ENCODE measurements at regions of chr12 and their contacts with region 1.

Region 1: GRCh38 chr12:76020731-76021672 is 10.6 kb downstream of the PHLDA1 start:
- DNase-seq: peak; percentile 97
- ATAC-seq: peak; percentile 59
- H3K4me3 ChIP-seq: peak overlapping the region; percentile 54
- H3K27ac ChIP-seq: peak overlapping the region; percentile 96
- H3K4me1 ChIP-seq: peaks cover 63% of the 10 kb centered on the region
- H3K27me3 ChIP-seq: no peaks in the 10 kb centered on the region
- CTCF ChIP-seq: no peak

Region 2: DNA sequence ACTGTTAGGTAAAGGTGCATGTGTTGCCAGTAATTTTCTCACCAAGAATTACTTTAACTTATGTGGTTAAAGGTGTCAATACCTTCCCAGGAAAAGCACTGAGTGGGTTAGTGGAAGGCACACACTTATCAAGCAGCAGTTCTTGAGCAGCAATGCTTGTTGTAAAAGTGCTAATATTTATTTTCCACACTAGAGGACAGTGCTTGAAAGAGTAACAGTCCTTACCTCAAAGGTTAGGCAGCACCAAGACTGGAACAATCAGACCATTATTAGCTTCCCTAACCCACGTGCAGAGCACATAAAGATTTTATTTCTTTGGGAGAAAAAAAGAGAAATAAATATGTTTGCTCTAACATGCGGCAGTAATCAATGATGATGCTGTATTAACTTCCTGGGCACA is 460.8 kb before region 1 on chr12:
- CTCF ChIA-PET with region 1: interaction called, 3 read pairs
- POLR2A ChIA-PET with region 1: no interaction called
- intact Hi-C with region 1: loop called (anchors 5 kb)
- DNase-seq: peak; percentile 63
- ATAC-seq: peak; percentile 94
- H3K4me3 ChIP-seq: no peak overlapping the region
- H3K27ac ChIP-seq: no peak overlapping the region
- H3K4me1 ChIP-seq: peaks cover 12% of the 10 kb centered on the region
- H3K27me3 ChIP-seq: no peaks in the 10 kb centered on the region
- CTCF ChIP-seq: peak; percentile 66

Region 3: DNA sequence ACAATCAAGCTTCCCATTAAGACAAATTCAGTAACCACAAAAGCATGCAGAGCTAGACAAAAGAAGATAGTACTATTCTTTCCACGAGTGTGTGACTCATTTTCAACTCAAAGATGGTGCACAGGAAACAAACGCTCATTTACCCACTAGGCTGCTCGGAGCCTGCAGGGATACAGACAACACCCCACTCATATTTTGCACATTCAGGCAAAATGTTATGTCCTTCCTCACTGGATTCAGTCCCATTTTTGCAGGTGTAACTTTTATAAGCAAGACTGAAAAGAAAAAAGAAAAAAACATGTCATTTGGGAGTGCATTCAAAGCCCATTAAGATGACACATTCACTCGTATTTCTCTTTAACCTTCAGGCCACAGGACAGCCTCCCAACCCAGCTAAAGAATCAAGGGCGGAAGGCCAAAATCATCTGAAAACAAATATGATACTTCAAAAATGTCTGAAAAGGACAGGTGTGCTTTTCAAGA is 362.1 kb before region 1 on chr12:
- CTCF ChIA-PET with region 1: no interaction called
- POLR2A ChIA-PET with region 1: no interaction called
- intact Hi-C with region 1: loop called (anchors 2 kb)
- DNase-seq: peak; percentile 79
- ATAC-seq: peak; percentile 63
- H3K4me3 ChIP-seq: no peak overlapping the region
- H3K27ac ChIP-seq: peak overlapping the region; percentile 95
- H3K4me1 ChIP-seq: peaks cover 67% of the 10 kb centered on the region
- H3K27me3 ChIP-seq: no peaks in the 10 kb centered on the region
- CTCF ChIP-seq: no peak

Region 4: DNA sequence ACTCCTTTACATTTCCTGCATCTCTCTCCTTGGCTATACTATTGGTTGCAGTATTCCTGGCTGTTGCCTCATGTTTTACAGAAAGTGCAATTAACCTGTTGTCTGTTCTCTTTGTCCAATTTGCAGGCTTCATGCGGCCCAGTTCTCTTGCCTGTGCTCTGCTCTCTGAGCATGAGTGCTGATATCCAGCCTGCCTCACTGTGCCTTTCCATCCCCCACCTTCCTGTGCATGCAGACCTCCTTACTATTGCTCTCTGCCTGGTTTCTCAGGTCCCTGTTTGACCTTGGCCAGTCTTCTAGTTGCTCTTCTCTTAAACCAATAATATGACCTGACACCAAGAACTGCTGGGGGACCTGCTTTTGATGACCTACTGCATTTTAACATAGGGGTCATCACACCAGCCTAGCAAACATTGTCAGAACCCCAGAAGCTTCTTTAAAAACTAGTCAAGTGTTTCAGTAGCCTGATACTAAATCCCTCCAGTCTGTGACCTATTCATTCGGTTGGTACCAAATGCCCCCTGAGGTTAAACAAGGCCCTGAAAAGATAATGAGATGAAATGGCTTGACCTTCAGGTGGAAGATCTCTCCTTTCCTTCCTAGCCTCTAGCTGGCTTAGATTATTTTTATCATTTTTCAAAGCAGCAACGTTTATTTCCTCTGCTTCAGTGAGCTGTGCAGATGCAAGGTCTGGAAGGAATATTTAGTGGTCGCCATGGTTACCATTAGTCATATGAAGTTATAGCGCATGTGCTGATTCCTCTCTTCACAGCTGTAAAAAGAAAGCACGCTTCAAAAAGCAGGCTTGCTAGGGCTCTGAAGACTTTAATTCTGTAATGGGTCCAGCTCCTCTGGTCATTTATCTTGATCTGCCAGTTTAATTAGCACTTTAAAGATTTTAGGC is 205.9 kb before region 1 on chr12:
- CTCF ChIA-PET with region 1: no interaction called
- POLR2A ChIA-PET with region 1: interaction called, 3 read pairs
- intact Hi-C with region 1: loop called (anchors 1 kb)
- DNase-seq: peak; percentile 71
- ATAC-seq: peak; percentile 60
- H3K4me3 ChIP-seq: no peak overlapping the region
- H3K27ac ChIP-seq: peak overlapping the region; percentile 39
- H3K4me1 ChIP-seq: peaks cover 29% of the 10 kb centered on the region
- H3K27me3 ChIP-seq: no peaks in the 10 kb centered on the region
- CTCF ChIP-seq: no peak

Region 5: DNA sequence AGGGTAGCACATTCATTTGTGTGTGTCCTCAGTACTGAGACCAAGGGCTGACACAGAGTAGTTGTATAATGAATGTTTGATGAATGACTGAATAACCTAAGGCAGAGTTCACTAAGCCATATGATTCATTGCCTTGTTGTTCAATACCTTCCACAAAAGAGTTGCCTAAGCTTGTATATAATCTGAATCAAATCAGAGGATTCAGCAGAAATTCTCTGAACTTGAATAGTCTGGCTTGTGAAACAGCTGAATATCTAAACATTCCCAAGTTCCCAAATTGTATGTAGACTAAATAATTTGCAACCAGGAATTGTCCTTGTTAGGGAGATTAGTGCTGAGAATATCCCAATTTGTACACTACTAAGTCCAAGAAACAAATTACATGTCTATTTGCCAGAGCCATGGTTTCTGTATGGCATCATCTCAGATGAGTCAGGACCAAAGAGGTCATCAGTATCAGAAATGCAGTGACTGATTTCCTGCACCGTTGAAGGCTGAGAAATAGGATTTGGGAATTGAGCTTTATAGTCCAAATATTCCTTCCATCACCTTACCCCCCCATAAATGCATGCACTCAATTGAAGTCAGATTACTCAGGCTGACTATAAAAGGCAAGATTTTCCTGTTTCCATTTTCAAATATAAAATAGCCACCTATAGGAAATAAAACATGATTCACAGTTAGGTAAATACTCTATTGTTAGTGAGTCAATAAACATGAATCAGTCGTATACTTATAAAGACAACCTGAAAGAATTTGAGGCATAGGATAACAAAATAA is 158.1 kb before region 1 on chr12:
- CTCF ChIA-PET with region 1: no interaction called
- POLR2A ChIA-PET with region 1: interaction called, 4 read pairs
- intact Hi-C with region 1: loop called (anchors 2 kb)
- DNase-seq: peak; percentile 97
- ATAC-seq: peak; percentile 77
- H3K4me3 ChIP-seq: peak overlapping the region; percentile 36; the same call in 1 of the 2 replicates
- H3K27ac ChIP-seq: peak overlapping the region; percentile 98
- H3K4me1 ChIP-seq: peaks cover 57% of the 10 kb centered on the region
- H3K27me3 ChIP-seq: no peaks in the 10 kb centered on the region
- CTCF ChIP-seq: no peak

Region 6: DNA sequence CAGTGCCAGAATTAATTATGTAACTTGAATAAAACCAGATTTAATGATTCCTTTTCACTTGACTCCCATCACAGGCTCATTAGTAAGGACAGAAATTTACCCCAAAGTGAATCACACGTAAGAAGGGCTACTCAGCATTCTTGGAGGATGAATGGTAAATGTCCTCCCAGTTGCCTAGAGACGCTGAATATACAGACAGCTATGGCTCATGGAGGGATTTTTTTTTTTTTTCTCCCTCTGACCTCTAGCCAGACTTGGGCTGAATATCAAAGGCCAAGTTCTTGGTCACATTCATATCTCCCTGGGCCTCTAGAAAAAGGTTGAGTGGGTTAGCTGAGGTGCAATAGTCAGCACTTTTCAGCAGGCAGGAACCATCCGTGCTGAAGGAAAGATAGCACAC is 67.0 kb before region 1 on chr12:
- CTCF ChIA-PET with region 1: interaction called, 3 read pairs
- POLR2A ChIA-PET with region 1: interaction called, 7 read pairs
- intact Hi-C with region 1: loop called (anchors 1 kb)
- DNase-seq: peak; percentile 96
- ATAC-seq: peak; percentile 77
- H3K4me3 ChIP-seq: no peak overlapping the region
- H3K27ac ChIP-seq: peak overlapping the region; percentile 89
- H3K4me1 ChIP-seq: peaks cover 49% of the 10 kb centered on the region
- H3K27me3 ChIP-seq: no peaks in the 10 kb centered on the region
- CTCF ChIP-seq: no peak

Region 7: GRCh38 chr12:76031537-76032073 is 10.6 kb after region 1 on chr12 and contains the start of gene PHLDA1:
- CTCF ChIA-PET with region 1: no interaction called
- POLR2A ChIA-PET with region 1: interaction called, 21 read pairs
- intact Hi-C with region 1: no loop called
- DNase-seq: peak; percentile 98
- ATAC-seq: peak; percentile 75
- H3K4me3 ChIP-seq: peak within 1 kb of the TSS; percentile 97
- H3K27ac ChIP-seq: peak within 1 kb of the TSS; percentile 94
- H3K4me1 ChIP-seq: peaks cover 34% of the 10 kb centered on the region
- H3K27me3 ChIP-seq: no peaks in the 10 kb centered on the region
- CTCF ChIP-seq: peak; percentile 34; the same call in 1 of the 2 replicates
- total RNA-seq, gene PHLDA1: 181 and 218 TPM in 2 replicates